Activated CD4-positive, alpha-beta T cell treated with anti-CD3 and anti-CD28 coated beads, Interleukin-2, amount 10 ng/mL, durations not matched to agents 7 days and 5 days (primary cell): ENCODE measurements at regions of chr22 and their contacts with region 1.

Region 1: GRCh38 chr22:23113067-23113846 is 28.5 kb downstream of the RSPH14 start:
- DNase-seq: no peak
- H3K4me3 Mint-ChIP-seq: no peak overlapping the region
- H3K27ac Mint-ChIP-seq: no peak overlapping the region
- H3K4me1 Mint-ChIP-seq: no peaks in the 10 kb centered on the region
- H3K27me3 Mint-ChIP-seq: no peaks in the 10 kb centered on the region

Region 2: DNA sequence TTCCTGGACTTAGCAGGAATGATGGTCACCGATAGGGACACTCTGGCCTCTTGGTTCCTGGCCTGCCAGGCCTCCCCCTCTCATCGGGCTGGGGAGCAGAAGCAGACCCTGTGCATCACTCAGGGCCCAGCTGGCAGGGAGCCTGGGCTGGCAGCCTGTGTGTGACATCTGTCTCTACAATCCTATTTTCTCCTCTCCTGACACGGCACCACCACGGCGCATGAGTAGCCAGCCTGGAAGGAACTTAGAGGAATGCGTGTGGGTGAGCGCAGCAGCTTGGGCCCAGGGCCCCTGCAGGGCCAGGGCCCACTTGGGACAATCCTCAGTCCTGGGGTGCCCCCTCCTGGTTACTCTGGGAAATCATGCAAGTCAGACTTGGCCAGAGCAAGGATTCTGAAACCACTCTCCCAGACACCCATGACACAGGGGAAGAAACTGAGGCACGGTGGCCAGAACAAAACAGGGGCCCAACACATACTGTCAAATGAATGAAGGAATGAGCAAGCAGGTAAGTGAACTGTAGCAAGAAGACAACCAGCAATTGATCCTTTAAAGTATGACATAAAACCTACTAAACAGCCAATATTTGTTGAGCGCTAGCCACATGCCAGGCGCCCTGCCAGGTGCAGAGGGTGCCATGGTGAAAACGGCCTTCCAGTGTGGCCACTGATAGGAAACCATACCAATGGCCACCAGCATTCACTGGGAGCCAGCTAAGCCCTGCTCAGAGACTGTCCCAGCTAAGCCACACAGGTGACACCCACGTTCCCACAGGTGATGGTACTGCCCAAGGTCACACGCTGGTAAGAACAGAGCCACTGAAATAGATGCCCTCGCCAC is 15.2 kb after region 1 on chr22:
- CTCF ChIA-PET with region 1: interaction called, 11 read pairs
- POLR2A ChIA-PET with region 1: no interaction called
- DNase-seq: peak; percentile 75
- H3K4me3 Mint-ChIP-seq: no peak overlapping the region
- H3K27ac Mint-ChIP-seq: no peak overlapping the region
- H3K4me1 Mint-ChIP-seq: no peaks in the 10 kb centered on the region
- H3K27me3 Mint-ChIP-seq: peaks cover 4% of the 10 kb centered on the region

Region 3: GRCh38 chr22:23147617-23148331 is 34.5 kb after region 1 on chr22:
- CTCF ChIA-PET with region 1: no interaction called
- POLR2A ChIA-PET with region 1: no interaction called
- DNase-seq: no peak
- H3K4me3 Mint-ChIP-seq: no peak overlapping the region
- H3K27ac Mint-ChIP-seq: no peak overlapping the region
- H3K4me1 Mint-ChIP-seq: peaks cover 26% of the 10 kb centered on the region
- H3K27me3 Mint-ChIP-seq: peaks cover 4% of the 10 kb centered on the region

Region 4: GRCh38 chr22:23157560-23158515 is 44.6 kb after region 1 on chr22:
- CTCF ChIA-PET with region 1: no interaction called
- POLR2A ChIA-PET with region 1: no interaction called
- DNase-seq: no peak
- H3K4me3 Mint-ChIP-seq: no peak overlapping the region
- H3K27ac Mint-ChIP-seq: no peak overlapping the region
- H3K4me1 Mint-ChIP-seq: peaks cover 13% of the 10 kb centered on the region
- H3K27me3 Mint-ChIP-seq: no peaks in the 10 kb centered on the region

Region 5: DNA sequence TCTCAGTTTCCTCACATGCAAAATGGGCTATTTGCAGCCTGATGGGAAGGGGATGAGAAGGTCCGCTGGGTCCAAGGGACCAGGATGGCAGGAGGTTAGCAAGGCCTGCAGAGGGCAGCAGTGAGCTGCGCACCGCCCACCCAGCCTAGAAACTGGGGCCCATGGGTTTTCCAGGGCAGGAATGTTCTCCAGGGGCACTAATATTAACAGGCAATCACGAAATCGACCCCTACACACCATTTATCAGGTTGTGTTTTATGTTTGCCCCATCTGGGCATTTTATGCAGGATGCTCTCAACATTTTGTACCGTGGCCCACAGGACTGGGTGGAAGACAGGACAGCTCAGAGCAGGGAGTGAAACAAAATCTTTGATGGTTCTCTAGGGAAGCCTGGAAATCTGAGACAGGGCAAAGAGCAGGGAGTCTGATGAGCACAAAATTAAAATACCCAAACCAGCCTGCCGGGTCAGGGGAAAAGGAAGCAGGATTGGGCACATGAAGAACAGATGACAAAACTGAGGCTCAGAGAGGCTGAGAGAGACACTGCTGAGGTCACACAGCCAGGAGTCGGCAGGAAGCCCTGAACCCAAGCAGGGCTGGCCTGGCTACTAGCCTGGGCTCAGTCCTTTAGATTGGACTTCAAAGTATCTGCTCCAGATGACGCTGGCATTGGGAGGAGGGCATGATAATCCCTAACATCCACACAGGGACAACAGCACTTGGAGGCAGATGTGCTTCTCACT is 65.4 kb after region 1 on chr22:
- CTCF ChIA-PET with region 1: no interaction called
- POLR2A ChIA-PET with region 1: no interaction called
- DNase-seq: peak; percentile 59
- H3K4me3 Mint-ChIP-seq: peak overlapping the region; percentile 69
- H3K27ac Mint-ChIP-seq: peak overlapping the region; percentile 74
- H3K4me1 Mint-ChIP-seq: peaks cover 54% of the 10 kb centered on the region
- H3K27me3 Mint-ChIP-seq: no peaks in the 10 kb centered on the region